ENCODE measurements at regions of chr3 and their contacts with region 1.

Region 1: GRCh38 chr3:138594150-138594934 is at the start of gene CEP70:
- DNase-seq: peak; percentile 88 to 94
- ATAC-seq: peak; percentile 96 to 97
- H3K4me3 ChIP-seq: peak within 1 kb of the TSS; percentile 63 to 86 (median 80)
- H3K27ac ChIP-seq: peak within 1 kb of the TSS; percentile 87 to 95 (median 92)
- H3K4me1 ChIP-seq: peaks cover 0 to 9% of the 10 kb centered on the region in 2 donors
- H3K27me3 ChIP-seq: no peaks in the 10 kb centered on the region
- CTCF ChIP-seq: peak; percentile 88 to 96 (median 91)
- POLR2A ChIP-seq: peak; percentile 87 to 94
- total RNA-seq, gene CEP70: 9.8 to 17.4 (median 12.3) TPM

Region 2: GRCh38 chr3:138608322-138609135 is 14.2 kb after region 1 on chr3 and contains the start of gene FAIM:
- in situ Hi-C with region 1: no loop called
- intact Hi-C with region 1: loop called (anchors 1 kb)
- DNase-seq: peak; percentile 22 to 63
- ATAC-seq: peak; percentile 83 to 86
- H3K4me3 ChIP-seq: peak within 1 kb of the TSS; percentile 63 to 82 (median 73)
- H3K27ac ChIP-seq: peak within 1 kb of the TSS; percentile 85 to 92 (median 90)
- H3K4me1 ChIP-seq: peaks cover 0 to 7% of the 10 kb centered on the region in 2 donors
- H3K27me3 ChIP-seq: peaks cover 0 to 3% (median 0%) of the 10 kb centered on the region in 3 donors
- CTCF ChIP-seq: no peak
- POLR2A ChIP-seq: peak in 1 of 2 donors; percentile 6
- total RNA-seq, gene FAIM: 0.88 to 3.0 (median 1.1) TPM in 3 of 4 donors, not detected in the other

Region 3: GRCh38 chr3:138915503-138916498 is 321.5 kb after region 1 on chr3:
- in situ Hi-C with region 1: loop called (anchors 5 to 10 kb)
- intact Hi-C with region 1: loop called (anchors 1 kb)
- DNase-seq: peak; percentile 82 to 94
- ATAC-seq: peak; percentile 91 to 93
- H3K4me3 ChIP-seq: peak overlapping the region; percentile 80 to 98 (median 87)
- H3K27ac ChIP-seq: peak overlapping the region; percentile 92 to 95 (median 94)
- H3K4me1 ChIP-seq: peaks cover 3 to 4% of the 10 kb centered on the region in 2 donors
- H3K27me3 ChIP-seq: no peaks in the 10 kb centered on the region
- CTCF ChIP-seq: peak; percentile 86 to 94 (median 89)
- POLR2A ChIP-seq: no peak

Region 4: DNA sequence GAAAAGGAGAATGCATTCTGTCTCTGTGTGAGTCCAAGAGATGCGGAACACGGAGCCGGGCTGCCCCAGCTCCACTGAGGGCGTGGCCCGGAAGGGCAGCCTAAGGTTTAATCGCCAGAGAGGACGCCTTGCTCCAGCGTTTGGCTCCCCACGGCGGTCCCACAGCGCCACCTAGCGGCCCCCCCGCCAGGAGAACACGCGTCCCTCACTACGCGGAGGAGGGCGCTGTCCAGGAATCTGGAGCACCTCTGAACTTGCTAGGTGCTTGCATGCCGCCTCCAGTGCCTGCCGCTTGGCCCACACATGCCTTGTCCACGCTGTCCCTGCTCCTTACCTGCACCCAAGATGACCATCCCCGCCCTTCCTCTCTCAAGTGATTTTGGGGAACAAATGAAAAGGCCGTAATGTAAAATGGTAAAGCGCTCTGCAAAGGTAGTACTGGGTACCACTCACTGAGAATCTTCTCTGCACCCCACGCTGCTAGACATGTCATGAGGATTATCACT is 735.1 kb after region 1 on chr3:
- in situ Hi-C with region 1: no loop called
- intact Hi-C with region 1: loop called (anchors 10 kb)
- DNase-seq: peak; percentile 51 to 73
- ATAC-seq: peak; percentile 85 to 97
- H3K4me3 ChIP-seq: peak overlapping the region in 3 of 4 donors; percentile 25 to 47 (median 28)
- H3K27ac ChIP-seq: no peak overlapping the region
- H3K4me1 ChIP-seq: no peaks in the 10 kb centered on the region
- H3K27me3 ChIP-seq: peaks cover 0 to 7% (median 0%) of the 10 kb centered on the region in 3 donors
- CTCF ChIP-seq: peak; percentile 91 to 99 (median 94)
- POLR2A ChIP-seq: no peak

Measured in gastrocnemius medialis (tissue), 4 donors.